PC-9 (cell line): ENCODE measurements at regions of chr1 and their contacts with region 1.

Region 1: DNA sequence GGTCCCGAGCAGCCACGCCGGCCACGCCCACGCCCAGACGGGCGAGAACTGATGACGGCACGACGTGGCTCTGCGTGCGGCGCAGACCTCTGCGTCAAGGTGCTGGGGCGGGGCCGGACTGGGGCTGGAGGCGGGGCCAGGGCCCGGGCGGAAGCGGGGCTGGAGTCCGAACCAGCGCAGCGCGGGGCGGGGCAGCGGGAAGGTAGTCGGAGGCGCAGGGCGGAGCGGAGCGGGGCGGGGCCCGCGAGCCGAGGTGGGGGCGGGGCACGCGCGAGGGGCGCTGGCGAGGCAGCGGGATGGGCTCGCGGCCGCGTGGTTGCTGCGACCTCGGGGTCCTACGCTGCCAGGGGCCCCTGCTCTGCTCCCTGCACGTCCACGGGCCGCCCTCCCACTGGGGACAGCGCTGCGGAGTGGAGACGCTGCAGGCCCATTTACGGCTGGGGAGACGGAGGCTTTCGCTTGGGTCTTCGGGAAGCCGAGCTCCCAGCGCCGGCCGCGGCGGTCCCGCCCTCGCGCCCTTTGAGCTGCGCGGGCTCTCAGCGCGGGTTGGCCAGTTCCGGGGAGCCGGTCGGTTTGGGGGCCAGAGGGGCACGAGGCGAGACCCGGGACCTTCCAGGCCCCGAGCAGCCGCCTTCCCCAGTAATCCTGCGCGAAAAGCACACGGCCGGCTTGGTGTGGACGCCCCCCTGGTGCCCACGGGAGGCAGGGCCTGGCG is at the start of gene PEX10:
- DNase-seq: peak; percentile 81 to 98
- H3K4me3 ChIP-seq: peak within 1 kb of the TSS; percentile 97
- H3K27ac ChIP-seq: peak within 1 kb of the TSS; percentile 36; the same call in 1 of the 2 replicates
- H3K4me1 ChIP-seq: peaks cover 25% of the 10 kb centered on the region
- H3K27me3 ChIP-seq: no peaks in the 10 kb centered on the region
- CTCF ChIP-seq: no peak
- total RNA-seq, gene PEX10: 24.3 and 26.3 TPM in 2 replicates

Region 2: DNA sequence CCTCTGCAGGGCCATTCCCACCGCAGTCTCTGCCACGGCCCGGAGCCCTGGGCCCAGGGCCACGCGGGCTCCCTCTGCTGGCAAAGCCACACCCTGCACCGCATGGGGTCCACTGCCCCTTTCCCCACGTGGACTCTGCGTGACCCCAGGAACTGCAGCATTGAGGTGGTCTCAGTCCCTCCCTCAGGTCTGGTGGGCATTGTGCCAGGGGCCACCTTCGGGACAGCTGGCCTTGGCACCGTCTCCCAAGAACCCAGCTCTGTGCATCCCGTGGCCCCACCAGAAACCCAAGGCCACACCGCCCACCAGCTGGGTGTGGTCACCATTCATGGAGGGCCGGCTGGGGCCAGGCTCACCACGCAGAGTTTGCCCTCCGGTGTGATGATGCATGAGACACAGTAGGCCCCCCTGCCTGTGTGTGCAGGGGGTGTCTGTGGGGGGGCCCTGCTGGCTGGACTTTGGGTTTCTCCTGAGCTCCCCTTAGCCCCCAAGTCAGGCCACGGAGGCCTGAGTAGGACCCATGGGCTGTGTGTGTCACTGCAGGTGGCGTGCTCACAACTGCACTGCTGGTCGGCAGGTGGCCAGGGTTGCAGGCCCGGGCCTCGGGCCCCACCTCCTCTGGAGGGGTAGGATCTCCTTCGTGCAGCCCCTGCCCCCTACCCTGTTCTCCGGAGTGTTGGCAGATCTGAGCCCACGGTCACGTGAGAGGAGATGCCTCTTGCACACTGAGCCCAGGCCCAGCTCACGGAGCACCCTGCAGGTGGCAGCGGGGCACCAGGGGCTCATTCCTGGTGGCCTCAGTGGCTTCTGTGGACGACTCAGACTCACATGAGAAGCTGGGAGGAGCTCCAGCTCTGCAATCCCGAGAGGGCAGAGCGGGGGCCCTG is 971.4 kb before region 1 on chr1:
- CTCF ChIA-PET with region 1: no interaction called
- POLR2A ChIA-PET with region 1: no interaction called
- intact Hi-C with region 1: no loop called
- DNase-seq: peak in 1 of 2 experiments; percentile 48
- H3K4me3 ChIP-seq: no peak overlapping the region
- H3K27ac ChIP-seq: no peak overlapping the region
- H3K4me1 ChIP-seq: peaks cover 5% of the 10 kb centered on the region; the same call in 1 of the 2 replicates
- H3K27me3 ChIP-seq: no peaks in the 10 kb centered on the region
- CTCF ChIP-seq: peak; percentile 80

Region 3: GRCh38 chr1:2240270-2241156 is 172.2 kb before region 1 on chr1:
- CTCF ChIA-PET with region 1: no interaction called
- POLR2A ChIA-PET with region 1: interaction called, 21 read pairs
- intact Hi-C with region 1: no loop called
- DNase-seq: peak in 1 of 2 experiments; percentile 38
- H3K4me3 ChIP-seq: no peak overlapping the region
- H3K27ac ChIP-seq: no peak overlapping the region
- H3K4me1 ChIP-seq: peaks cover 10% of the 10 kb centered on the region
- H3K27me3 ChIP-seq: no peaks in the 10 kb centered on the region
- CTCF ChIP-seq: no peak

Region 4: DNA sequence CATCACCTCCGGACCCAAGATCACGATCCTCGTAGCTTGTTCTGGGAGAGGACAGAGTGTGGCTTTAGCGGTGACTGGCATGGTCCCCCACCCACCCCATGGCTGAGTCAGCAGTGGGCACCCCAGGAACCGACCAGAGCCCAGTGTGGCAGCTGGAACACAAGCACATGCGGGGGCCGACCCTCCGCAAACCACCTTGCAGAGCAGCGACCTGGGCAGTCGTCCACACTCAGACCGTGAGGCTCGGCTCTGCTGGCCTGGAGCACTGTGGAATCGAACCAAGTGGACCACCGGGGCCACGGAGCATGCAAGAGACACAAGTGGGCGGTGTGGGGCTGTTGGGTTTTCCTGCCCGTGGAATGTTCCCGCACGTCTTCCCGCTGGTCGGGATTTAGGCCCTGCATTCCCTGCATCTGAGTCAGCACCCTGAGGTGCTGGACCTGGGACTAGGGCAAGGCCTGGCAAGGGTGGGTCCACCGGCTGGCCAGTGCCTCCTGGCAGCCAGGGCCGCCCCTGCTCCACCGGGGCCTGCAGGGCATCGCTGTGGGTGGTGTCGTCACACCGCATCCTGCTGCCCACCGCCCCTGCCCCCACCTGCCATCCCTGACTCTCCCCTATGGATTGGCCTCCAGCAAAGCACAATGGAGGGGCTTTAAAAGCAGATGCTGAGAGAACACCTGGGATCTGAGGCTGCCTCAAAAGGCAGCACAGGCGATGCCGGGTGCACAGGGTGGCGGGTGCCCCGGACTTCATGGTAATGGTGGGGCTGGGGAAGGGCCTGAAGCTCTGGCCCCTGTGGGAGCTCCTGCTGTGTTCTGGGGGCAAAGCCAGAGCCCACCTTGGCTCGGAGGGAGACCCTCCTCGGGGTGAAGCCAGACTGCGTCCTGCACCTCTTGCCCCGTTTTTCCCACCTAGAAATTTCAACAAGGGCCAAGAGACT is 39.9 kb before region 1 on chr1:
- CTCF ChIA-PET with region 1: no interaction called
- POLR2A ChIA-PET with region 1: no interaction called
- intact Hi-C with region 1: no loop called
- DNase-seq: peak; percentile 24 to 40
- H3K4me3 ChIP-seq: no peak overlapping the region
- H3K27ac ChIP-seq: no peak overlapping the region
- H3K4me1 ChIP-seq: no peaks in the 10 kb centered on the region; the same call in 1 of the 2 replicates
- H3K27me3 ChIP-seq: no peaks in the 10 kb centered on the region
- CTCF ChIP-seq: no peak

Region 5: GRCh38 chr1:2525920-2526823 is 113.5 kb after region 1 on chr1 and contains the start of gene PANK4:
- CTCF ChIA-PET with region 1: interaction called, 3 read pairs
- POLR2A ChIA-PET with region 1: no interaction called
- intact Hi-C with region 1: loop called (anchors 5 kb)
- DNase-seq: peak; percentile 80 to 85
- H3K4me3 ChIP-seq: peak within 1 kb of the TSS; percentile 96
- H3K27ac ChIP-seq: no peak within 1 kb of the TSS
- H3K4me1 ChIP-seq: peaks cover 18% of the 10 kb centered on the region
- H3K27me3 ChIP-seq: peaks cover 20% of the 10 kb centered on the region
- CTCF ChIP-seq: no peak; the same call in 1 of the 2 replicates
- total RNA-seq, gene PANK4: 20.5 and 33.4 TPM in 2 replicates

Region 6: DNA sequence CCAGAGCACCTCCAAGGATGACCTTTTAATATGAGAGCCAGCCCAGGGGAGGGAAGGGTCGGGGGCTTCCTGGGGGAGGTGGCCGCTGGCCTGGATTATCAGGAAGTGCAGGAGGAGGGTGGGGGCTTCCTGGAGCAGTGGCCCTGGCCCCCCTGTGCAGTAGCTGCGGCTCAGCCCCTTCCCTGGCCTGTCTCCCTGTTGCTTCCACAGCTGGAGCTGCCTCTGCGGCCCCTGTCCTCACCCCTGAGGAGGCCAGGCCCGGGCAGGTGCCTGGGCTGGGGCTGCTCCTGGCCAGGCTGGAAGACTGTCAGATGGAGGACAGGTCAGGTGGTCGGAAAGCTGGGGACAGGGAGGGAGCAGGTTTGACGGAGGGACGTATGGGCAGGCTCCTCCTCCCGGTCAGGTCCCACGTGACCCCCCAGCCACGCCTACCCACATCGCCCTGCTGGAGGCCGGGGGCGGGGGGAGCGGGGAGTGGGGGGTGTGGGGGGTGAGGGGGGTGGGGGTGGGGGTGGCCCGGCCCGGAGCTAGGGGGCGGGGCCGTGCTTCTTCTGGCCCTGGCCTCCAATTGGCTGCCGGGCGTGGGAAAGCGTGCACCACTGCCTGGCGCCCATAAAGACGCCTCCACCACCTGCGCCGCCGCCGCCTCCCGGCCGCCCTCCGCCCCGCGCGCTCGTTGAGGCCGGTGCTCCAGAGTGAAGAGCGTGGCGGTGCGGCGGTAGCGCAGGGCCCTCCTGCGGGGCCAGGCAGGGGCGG is 133.3 kb after region 1 on chr1:
- CTCF ChIA-PET with region 1: no interaction called
- POLR2A ChIA-PET with region 1: no interaction called
- intact Hi-C with region 1: loop called (anchors 1 kb)
- DNase-seq: peak; percentile 74 to 90
- H3K4me3 ChIP-seq: peak overlapping the region; percentile 87
- H3K27ac ChIP-seq: peak overlapping the region; percentile 45
- H3K4me1 ChIP-seq: peaks cover 41% of the 10 kb centered on the region
- H3K27me3 ChIP-seq: no peaks in the 10 kb centered on the region
- CTCF ChIP-seq: no peak

Region 7: DNA sequence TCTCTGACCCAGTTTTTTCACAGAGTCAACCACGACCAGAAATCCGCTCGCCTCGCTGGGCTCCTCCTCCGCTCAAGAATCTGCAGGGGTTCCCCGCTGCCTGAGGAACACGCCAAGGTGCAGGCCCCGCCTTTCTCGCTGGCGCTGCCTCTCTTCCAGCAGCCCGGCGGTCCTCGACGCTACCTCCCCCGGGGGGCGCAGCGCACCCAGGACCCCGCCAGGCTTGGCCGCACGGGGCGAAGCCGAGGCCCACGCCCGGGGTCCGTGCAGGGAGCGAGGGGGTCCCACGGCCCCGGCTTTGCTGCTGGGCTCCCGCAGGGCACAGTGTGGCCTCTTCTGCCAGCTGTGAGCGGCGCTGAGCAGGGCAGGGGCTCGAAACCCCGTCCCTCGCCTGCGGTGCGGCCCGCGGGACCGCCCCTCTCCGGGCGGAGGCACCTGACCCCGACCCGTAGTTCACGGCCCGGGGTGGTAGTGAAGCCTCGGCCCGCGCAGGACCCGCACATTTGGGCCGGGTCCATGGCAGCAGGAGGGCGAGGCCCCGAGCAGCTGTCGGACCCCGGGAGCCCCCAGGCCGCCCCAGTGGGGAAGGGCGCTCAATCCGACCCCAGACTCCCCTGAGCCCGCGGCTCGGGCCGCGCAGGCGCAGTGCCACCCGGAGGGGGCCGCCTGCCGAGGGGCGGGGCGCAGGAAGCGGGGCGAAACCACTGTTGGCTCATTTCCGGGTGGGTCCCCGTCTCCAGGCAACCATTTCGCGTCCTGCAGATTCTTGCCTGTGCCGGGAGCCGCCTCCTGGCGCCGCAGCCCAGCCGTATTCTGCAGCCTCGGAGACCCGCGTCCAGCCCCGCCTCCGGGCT is 230.1 kb after region 1 on chr1:
- CTCF ChIA-PET with region 1: no interaction called
- POLR2A ChIA-PET with region 1: no interaction called
- intact Hi-C with region 1: loop called (anchors 10 kb)
- DNase-seq: peak; percentile 63 to 88
- H3K4me3 ChIP-seq: peak overlapping the region; percentile 91
- H3K27ac ChIP-seq: no peak overlapping the region
- H3K4me1 ChIP-seq: 0 out of 2 replicates have a peak, but pooled peaks cover 5% of the 10 kb centered on the region
- H3K27me3 ChIP-seq: peaks cover 16% of the 10 kb centered on the region
- CTCF ChIP-seq: no peak